Common myeloid progenitor, CD34-positive (primary cell): ENCODE measurements at regions of chr7 and their contacts with region 1.

Region 1: DNA sequence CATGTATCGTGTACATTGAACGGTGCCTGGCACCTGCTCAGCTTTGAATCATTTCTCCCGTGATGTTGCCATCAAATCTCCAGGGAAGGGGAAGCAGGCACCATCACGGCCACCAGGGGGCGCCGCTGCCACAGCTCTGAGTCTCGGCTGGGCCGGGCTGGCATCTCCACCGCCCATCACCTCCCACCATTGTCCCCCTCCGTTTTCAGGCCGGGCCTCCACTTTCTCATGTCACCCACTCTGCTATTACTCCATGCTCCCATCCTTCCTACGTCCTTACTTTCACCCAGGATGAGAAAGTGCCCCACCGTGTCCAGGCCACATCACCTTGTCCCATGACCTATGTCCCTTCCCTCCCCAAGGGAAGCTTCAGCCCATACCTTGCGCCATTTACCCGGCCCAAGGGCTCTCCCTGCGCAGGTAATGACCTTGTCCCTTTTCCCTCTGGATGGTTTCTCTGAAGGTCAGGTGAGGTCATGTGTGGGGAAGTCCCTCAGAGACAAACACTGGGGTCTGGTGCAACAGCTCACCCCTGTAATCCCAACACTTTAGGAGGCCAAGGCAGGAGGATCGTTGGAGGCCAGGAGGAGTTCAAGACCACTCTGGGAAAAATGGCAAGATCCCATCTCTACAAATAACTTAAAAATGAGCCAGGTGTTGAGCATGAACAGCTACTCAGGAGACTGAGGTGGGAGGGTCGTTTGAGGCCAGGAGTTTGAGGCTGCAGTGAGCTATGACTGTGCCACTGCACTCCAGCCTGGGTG is 31.8 kb upstream of the OCM2 start:
- DNase-seq: peak; percentile 52 to 77 (median 73)
- H3K4me3 ChIP-seq: no peak overlapping the region
- H3K27ac ChIP-seq: no peak overlapping the region
- H3K4me1 ChIP-seq: no peaks in the 10 kb centered on the region
- H3K27me3 ChIP-seq: peaks cover 0 to 4% (median 0%) of the 10 kb centered on the region in 5 experiments

Region 2: DNA sequence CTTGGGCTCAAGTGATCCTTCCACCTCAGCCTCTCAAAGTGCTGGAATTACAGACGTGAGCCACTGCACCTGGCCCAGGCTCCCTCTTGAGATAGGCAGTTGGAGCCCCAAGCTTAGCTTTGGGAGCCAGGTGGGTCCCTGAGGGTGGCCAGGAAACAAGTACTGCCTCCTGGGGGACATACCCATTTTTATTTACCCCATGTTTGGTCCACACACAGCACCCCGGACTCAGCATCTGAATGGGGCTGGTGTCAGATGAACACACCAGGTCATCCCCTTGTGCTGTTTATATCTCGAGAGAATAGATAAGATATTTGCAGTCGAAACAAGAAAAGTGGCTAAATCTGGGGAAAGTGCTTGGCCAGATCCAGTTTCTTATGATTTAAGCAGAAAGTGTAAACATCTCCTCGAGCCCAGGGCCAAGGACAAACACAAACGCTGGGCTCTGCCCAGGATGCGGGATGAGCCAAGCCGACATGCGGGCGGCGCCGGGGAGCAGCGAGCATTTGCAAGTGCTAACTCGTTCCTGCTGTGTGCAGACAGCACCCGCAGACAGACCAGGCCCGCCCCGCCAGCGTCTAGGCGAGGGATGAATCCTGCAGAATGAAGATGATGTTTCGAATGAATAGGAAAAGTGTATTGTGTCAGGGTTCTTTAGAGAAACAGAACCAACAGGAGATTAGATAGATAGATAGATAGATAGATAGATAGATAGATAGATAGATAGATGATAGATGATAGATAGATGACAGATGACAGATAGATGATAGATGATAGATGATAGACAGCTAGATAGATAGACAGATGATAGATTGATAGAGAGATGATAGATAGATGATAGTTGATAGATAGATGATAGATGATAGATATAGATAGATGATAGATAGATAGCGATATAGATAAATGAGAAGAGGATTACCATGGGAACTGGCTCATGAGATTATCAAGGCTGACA is 12.6 kb after region 1 on chr7:
- CTCF ChIA-PET with region 1: interaction called, 15 read pairs
- POLR2A ChIA-PET with region 1: no interaction called
- DNase-seq: no peak
- H3K4me3 ChIP-seq: no peak overlapping the region
- H3K27ac ChIP-seq: no peak overlapping the region
- H3K4me1 ChIP-seq: no peaks in the 10 kb centered on the region
- H3K27me3 ChIP-seq: peaks cover 0 to 10% (median 0%) of the 10 kb centered on the region in 5 experiments

Region 3: DNA sequence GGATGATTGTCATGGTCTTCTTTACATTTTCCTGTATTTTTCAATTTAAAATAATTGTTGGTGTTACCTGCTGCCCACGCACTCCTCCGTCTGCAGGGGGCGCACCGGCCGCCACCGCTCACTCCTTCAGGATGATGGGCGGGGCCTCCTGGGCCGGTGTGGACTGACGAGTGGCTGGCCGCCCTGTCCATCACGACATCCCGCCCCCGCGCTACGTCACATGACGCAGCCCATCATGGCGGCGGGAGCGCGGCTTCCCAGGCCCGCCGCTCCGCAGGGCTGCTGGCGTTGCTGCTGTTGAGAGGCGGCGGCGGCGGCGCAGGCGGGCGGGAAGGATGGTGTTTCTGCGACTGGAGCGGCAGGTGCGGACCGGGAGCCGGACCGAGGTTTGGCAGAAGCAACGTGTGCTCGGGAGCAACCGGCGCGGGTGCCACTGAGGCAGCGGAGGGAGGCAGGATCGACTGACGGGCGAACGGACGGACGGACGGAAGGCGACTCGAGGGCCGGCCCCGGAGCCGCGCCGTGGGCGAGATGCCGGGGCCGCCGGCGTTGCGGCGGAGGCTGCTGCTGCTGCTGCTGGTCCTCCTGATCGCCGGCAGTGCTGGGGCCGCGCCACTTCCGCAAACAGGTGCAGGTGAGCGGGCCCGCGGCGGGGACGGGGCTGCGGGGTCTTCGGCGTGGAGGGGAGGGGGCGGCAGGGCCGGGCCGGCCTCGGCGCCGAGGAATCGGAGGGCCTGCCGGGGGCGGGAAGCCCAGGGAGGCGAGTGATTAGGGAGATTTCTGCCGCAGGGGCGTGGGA is 85.1 kb after region 1 on chr7 and contains the start of gene LMTK2:
- CTCF ChIA-PET with region 1: interaction called, 22 read pairs
- POLR2A ChIA-PET with region 1: no interaction called
- DNase-seq: peak; percentile 91 to 95 (median 95)
- H3K4me3 ChIP-seq: peak within 1 kb of the TSS; percentile 82 to 98 (median 92)
- H3K27ac ChIP-seq: peak within 1 kb of the TSS in 1 of 2 experiments; percentile 54
- H3K4me1 ChIP-seq: peaks cover 3 to 11% (median 7%) of the 10 kb centered on the region in 4 experiments
- H3K27me3 ChIP-seq: peaks cover 0 to 3% (median 0%) of the 10 kb centered on the region in 5 experiments

Region 4: GRCh38 chr7:98174334-98175259 is 152.8 kb after region 1 on chr7:
- CTCF ChIA-PET with region 1: interaction called, 316 read pairs
- POLR2A ChIA-PET with region 1: no interaction called
- DNase-seq: no peak
- H3K4me3 ChIP-seq: no peak overlapping the region
- H3K27ac ChIP-seq: no peak overlapping the region
- H3K4me1 ChIP-seq: no peaks in the 10 kb centered on the region
- H3K27me3 ChIP-seq: no peaks in the 10 kb centered on the region